ENCODE measurements at regions of chr1 and their contacts with region 1.

Region 1: GRCh38 chr1:220879076-220879508 is at the start of gene HLX:
- DNase-seq: peak; percentile 96
- ATAC-seq: peak; percentile 94
- total RNA-seq, gene HLX: 5.0 TPM

Region 2: DNA sequence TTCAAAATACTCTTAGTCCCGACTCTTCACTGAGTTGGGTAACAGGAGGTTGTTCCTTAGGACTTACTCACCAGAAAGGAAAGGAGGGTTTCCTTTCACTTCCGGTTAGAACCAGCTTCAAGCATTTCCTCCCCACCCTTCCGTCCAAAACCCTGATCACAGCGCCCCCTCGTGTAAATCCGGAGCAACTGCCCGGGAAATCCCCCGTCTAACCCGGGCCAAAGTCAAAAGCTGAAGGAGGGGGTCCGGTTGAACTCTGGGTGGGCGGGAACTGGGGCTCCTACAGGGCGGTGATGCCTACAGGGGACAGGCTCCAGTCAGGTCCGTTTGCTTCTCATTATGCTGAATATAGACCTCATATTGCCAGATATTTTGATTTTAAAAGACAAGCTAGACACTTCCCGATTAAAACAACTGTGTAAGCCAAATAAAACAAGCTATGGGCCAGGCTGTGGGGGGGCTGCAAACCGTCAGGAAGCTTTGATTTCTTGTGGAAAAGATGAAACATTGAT is 145.9 kb before region 1 on chr1:
- intact Hi-C with region 1: no loop called
- DNase-seq: peak; percentile 73
- ATAC-seq: peak; percentile 92

Region 3: DNA sequence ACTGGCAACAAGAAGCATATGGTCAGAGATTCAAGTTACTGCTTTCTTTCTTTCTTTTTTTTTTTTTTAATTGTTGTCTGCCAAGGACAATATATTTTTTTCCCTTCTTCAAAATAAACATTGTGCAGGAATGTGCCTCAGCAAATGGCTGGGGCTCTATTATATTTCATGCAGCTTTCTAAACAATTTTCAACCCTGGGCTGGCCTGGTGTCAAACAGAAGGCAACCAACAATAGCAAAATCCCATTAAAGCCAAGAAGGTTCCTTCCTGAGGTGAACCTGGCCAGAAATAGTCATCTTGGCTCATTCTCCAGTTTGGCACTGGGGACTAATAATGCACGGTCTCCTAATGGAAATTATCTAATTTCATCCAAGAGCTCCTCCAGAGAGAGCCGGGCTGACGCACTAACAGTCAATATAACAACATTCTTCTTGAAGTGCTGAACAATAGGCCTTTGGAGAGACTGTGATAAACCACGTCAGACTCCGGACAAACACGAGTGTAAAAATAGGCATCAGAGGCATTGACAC is 35.5 kb before region 1 on chr1:
- intact Hi-C with region 1: loop called (anchors 2 kb)
- DNase-seq: peak; percentile 69
- ATAC-seq: peak; percentile 93

Region 4: DNA sequence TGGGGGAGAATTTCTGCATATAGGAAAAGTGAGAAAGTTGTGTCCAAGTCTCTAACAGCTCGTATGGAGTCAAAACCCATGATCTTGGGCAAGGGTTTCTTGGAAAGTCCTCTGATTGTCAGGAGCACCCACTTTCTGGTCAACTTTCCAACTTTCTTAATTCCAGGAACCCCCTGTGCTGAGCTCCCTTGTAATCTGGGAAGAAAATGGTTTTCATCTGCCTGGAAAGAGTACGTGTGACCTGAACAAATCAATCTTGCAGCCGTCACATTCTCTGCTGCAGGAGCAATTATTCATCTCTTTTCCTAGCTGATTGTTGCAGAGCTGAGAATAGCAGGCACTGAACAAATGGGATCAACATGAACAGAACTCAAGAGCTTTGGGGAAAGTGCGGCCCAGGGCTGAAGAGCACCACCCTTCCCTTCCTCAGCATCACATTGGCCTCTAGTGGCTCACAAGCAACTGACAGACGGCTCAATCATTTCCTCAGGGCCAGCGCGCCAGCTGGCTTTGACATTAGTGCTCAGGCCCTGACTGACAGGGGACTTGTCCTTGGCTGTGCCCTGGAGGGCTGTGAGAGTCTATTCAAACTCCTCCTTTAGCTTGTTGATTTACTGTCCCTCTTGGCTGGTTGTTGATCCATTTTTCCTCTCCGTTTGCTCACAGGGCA is 295.4 kb after region 1 on chr1:
- intact Hi-C with region 1: loop called (anchors 10 kb)
- DNase-seq: peak; percentile 87
- ATAC-seq: peak; percentile 99

Region 5: GRCh38 chr1:221263831-221264767 is 385.0 kb after region 1 on chr1:
- intact Hi-C with region 1: loop called (anchors 5 kb)
- DNase-seq: no peak
- ATAC-seq: peak; percentile 48

Region 6: GRCh38 chr1:222455188-222455879 is 1576.2 kb after region 1 on chr1:
- intact Hi-C with region 1: loop called (anchors 10 kb)
- DNase-seq: peak; percentile 87
- ATAC-seq: peak; percentile 95

Measured in Right ventricle myocardium inferior (tissue), 1 donor.